HepG2 (cell line): ENCODE measurements at regions of chr6 and their contacts with region 1.

Region 1: GRCh38 chr6:128520436-128521281 is at the start of gene PTPRK:
- DNase-seq: peak; percentile 90
- ATAC-seq: peak; percentile 80
- H3K4me3 ChIP-seq: peak within 1 kb of the TSS; percentile 74 to 98 (median 97)
- H3K27ac ChIP-seq: peak within 1 kb of the TSS; percentile 93
- H3K4me1 ChIP-seq: peaks cover 53% of the 10 kb centered on the region
- H3K27me3 ChIP-seq: no peaks in the 10 kb centered on the region; a peak in 1 of 5 replicates
- CTCF ChIP-seq: peak; percentile 43; the same call in 1 of the 2 replicates
- EP300 ChIP-seq: peak; percentile 14 to 31; a peak in 1 of 4 replicates
- POLR2A ChIP-seq: peak; percentile 96 to 97
- RAD21 ChIP-seq: peak; percentile 95
- total RNA-seq, gene PTPRK: 52.4 and 98.3 TPM in 2 replicates

Region 2: GRCh38 chr6:127737009-127737486 is 783.6 kb before region 1 on chr6:
- CTCF ChIA-PET with region 1: no interaction called
- POLR2A ChIA-PET with region 1: no interaction called
- in situ Hi-C with region 1: no loop called
- intact Hi-C with region 1: loop called (anchors 5 kb)
- DNase-seq: peak; percentile 63
- ATAC-seq: peak; percentile 99
- H3K4me3 ChIP-seq: no peak overlapping the region
- H3K27ac ChIP-seq: no peak overlapping the region
- H3K4me1 ChIP-seq: no peaks in the 10 kb centered on the region
- H3K27me3 ChIP-seq: peaks cover 0 to 13% of the 10 kb centered on the region in 2 experiments; a peak in 1 of 5 replicates
- CTCF ChIP-seq: peak; percentile 82
- EP300 ChIP-seq: no peak
- POLR2A ChIP-seq: no peak
- RAD21 ChIP-seq: peak; percentile 82

Region 3: DNA sequence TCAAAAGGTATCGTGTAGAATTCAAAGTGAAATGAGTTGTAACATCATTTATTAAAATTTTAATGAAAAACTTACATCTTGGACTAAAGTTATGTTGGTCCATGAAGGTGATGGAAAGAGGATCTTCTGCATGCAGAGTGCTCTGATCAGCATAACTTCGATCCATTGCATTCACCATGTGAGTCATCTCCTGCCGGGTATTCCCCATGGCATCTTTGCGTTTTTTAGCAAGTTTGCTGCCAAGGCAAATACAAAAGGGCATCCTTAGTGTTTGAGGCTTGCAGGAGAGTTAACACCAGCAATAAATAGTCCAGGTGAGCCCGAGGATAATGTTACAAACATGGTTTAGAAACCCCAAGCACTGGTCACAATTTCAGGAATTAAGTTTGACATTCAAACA is 515.6 kb before region 1 on chr6:
- CTCF ChIA-PET with region 1: no interaction called
- POLR2A ChIA-PET with region 1: no interaction called
- in situ Hi-C with region 1: no loop called
- intact Hi-C with region 1: loop called (anchors 10 kb)
- DNase-seq: no peak
- ATAC-seq: no peak
- H3K4me3 ChIP-seq: no peak overlapping the region
- H3K27ac ChIP-seq: no peak overlapping the region
- H3K4me1 ChIP-seq: peaks cover 21% of the 10 kb centered on the region
- H3K27me3 ChIP-seq: no peaks in the 10 kb centered on the region
- CTCF ChIP-seq: no peak
- EP300 ChIP-seq: no peak
- POLR2A ChIP-seq: no peak
- RAD21 ChIP-seq: no peak

Region 4: GRCh38 chr6:128327890-128328289 is 192.8 kb before region 1 on chr6:
- CTCF ChIA-PET with region 1: no interaction called
- POLR2A ChIA-PET with region 1: no interaction called
- in situ Hi-C with region 1: no loop called
- intact Hi-C with region 1: loop called (anchors 2 kb)
- DNase-seq: peak; percentile 37
- ATAC-seq: peak; percentile 89
- H3K4me3 ChIP-seq: no peak overlapping the region
- H3K27ac ChIP-seq: no peak overlapping the region
- H3K4me1 ChIP-seq: no peaks in the 10 kb centered on the region
- H3K27me3 ChIP-seq: no peaks in the 10 kb centered on the region
- CTCF ChIP-seq: peak; percentile 79
- EP300 ChIP-seq: no peak
- POLR2A ChIP-seq: no peak
- RAD21 ChIP-seq: peak; percentile 47

Region 5: GRCh38 chr6:128421788-128422187 is 98.9 kb before region 1 on chr6:
- CTCF ChIA-PET with region 1: no interaction called
- POLR2A ChIA-PET with region 1: no interaction called
- in situ Hi-C with region 1: no loop called
- intact Hi-C with region 1: loop called (anchors 2 kb)
- DNase-seq: peak; percentile 56
- ATAC-seq: peak; percentile 83
- H3K4me3 ChIP-seq: no peak overlapping the region
- H3K27ac ChIP-seq: peak overlapping the region; percentile 57
- H3K4me1 ChIP-seq: peaks cover 31% of the 10 kb centered on the region
- H3K27me3 ChIP-seq: no peaks in the 10 kb centered on the region
- CTCF ChIP-seq: no peak
- EP300 ChIP-seq: no peak
- POLR2A ChIP-seq: no peak
- RAD21 ChIP-seq: no peak

Region 6: DNA sequence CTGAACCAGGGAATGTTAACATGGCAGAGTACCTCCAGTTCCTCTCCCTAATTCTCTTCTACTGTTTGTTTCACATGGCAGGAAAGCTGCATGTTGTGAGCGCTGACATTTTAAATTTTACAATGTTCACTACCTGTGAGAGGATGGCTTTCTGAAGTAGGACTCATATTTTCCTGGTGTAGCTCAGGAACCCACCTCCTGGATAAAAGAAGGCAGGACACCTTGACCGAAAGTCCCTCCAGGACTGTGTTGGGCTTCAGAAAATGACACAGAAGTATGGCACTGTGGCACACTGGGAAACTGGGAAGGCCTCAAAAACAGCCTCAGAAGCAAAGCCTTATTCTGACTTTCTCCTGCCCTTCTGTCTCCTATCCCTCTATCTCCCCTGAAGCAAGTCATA is 33.6 kb before region 1 on chr6:
- CTCF ChIA-PET with region 1: interaction called, 3 read pairs
- POLR2A ChIA-PET with region 1: interaction called, 5 read pairs
- in situ Hi-C with region 1: no loop called
- intact Hi-C with region 1: loop called (anchors 1 kb)
- DNase-seq: peak; percentile 46
- ATAC-seq: peak; percentile 97
- H3K4me3 ChIP-seq: no peak overlapping the region
- H3K27ac ChIP-seq: no peak overlapping the region
- H3K4me1 ChIP-seq: peaks cover 44% of the 10 kb centered on the region
- H3K27me3 ChIP-seq: no peaks in the 10 kb centered on the region
- CTCF ChIP-seq: peak; percentile 60
- EP300 ChIP-seq: no peak
- POLR2A ChIP-seq: no peak
- RAD21 ChIP-seq: peak; percentile 72

Region 7: GRCh38 chr6:128508588-128509296 is 11.9 kb before region 1 on chr6:
- CTCF ChIA-PET with region 1: no interaction called
- POLR2A ChIA-PET with region 1: interaction called, 134 read pairs
- in situ Hi-C with region 1: no loop called
- intact Hi-C with region 1: loop called (anchors 1 kb)
- DNase-seq: peak; percentile 97
- ATAC-seq: peak; percentile 71
- H3K4me3 ChIP-seq: peak overlapping the region; percentile 17 to 66 (median 55); a peak in 5 of 6 replicates
- H3K27ac ChIP-seq: peak overlapping the region; percentile 98
- H3K4me1 ChIP-seq: peaks cover 96% of the 10 kb centered on the region
- H3K27me3 ChIP-seq: no peaks in the 10 kb centered on the region
- CTCF ChIP-seq: no peak
- EP300 ChIP-seq: peak in 1 of 2 experiments; percentile 71; a peak in 3 of 4 replicates
- POLR2A ChIP-seq: peak in 1 of 2 experiments; percentile 61; a peak in 1 of 4 replicates
- RAD21 ChIP-seq: no peak

Region 8: DNA sequence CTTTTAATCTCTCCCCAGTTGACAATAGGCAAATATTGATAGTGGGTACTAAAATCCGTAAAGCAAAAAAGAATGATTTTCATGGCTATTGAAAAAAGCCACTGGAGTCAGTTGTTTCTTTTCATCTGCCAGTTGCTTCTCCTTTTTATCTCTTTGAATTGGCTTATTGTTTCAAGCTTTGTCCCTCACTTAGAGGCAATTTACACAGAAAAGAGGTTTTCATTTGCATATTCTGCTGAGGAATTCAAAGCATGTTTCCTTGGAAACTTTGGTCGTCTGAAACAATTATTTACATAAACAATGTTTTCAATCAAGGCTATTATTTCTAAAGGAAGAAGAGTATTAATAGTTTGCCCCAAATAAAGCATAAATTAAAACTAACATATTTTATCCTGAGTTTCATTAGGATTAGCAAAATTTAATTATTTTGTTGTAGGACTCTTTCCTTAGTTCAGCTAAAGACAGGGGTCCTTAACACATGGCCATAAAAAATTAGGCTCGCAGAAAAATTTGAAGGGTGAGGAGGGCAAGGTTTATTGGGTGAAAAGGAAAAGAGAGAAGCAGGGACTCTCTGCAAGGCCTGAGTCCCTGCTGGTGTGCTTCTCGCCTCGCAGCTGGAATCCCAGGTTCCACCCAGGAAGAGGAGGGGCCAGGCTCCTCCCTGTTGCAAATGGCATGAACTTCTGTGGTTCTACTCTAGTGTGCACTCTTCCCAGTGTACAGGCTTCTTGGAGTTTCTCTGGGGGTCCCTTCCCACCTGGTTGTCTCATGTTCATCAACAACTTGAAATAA is 223.5 kb after region 1 on chr6:
- CTCF ChIA-PET with region 1: no interaction called
- POLR2A ChIA-PET with region 1: no interaction called
- in situ Hi-C with region 1: no loop called
- intact Hi-C with region 1: no loop called
- DNase-seq: no peak
- ATAC-seq: no peak
- H3K4me3 ChIP-seq: no peak overlapping the region
- H3K27ac ChIP-seq: no peak overlapping the region
- H3K4me1 ChIP-seq: no peaks in the 10 kb centered on the region
- H3K27me3 ChIP-seq: peaks cover 0 to 1% of the 10 kb centered on the region in 2 experiments; a peak in 2 of 5 replicates
- CTCF ChIP-seq: no peak
- EP300 ChIP-seq: no peak
- POLR2A ChIP-seq: no peak
- RAD21 ChIP-seq: no peak

Region 9: GRCh38 chr6:128807577-128807976 is 286.9 kb after region 1 on chr6:
- CTCF ChIA-PET with region 1: no interaction called
- POLR2A ChIA-PET with region 1: no interaction called
- in situ Hi-C with region 1: no loop called
- intact Hi-C with region 1: no loop called
- DNase-seq: peak; percentile 16
- ATAC-seq: no peak
- H3K4me3 ChIP-seq: no peak overlapping the region
- H3K27ac ChIP-seq: no peak overlapping the region
- H3K4me1 ChIP-seq: no peaks in the 10 kb centered on the region
- H3K27me3 ChIP-seq: no peaks in the 10 kb centered on the region
- CTCF ChIP-seq: peak; percentile 28; the same call in 1 of the 2 replicates
- EP300 ChIP-seq: no peak
- POLR2A ChIP-seq: no peak
- RAD21 ChIP-seq: no peak

Region 10: DNA sequence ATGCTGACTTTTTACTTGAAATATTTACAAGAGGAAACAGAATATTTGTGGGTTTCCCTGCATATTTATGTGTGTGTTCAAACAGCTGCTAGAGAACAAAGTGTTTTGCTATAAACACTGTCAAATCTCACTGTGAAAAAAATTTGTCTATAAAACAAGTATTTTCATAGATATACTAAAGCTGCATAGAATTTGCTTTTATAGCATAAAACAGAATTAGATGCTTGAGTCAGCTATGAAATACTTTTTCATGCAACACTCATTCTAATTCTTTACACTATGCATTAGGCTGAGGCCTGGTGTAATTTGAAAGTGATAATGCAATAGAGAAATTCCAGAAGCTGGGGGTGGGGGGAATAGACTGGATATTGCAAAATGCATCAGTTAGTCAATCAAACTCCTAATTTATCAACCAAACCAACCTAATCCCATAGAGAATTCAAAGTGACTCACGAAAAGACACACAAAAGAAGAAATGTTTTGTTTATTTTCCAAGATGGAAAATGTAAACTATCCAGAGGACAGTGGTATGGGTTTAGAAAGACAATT is 510.5 kb after region 1 on chr6:
- CTCF ChIA-PET with region 1: no interaction called
- POLR2A ChIA-PET with region 1: no interaction called
- in situ Hi-C with region 1: no loop called
- intact Hi-C with region 1: no loop called
- DNase-seq: no peak
- ATAC-seq: no peak
- H3K4me3 ChIP-seq: no peak overlapping the region
- H3K27ac ChIP-seq: no peak overlapping the region
- H3K4me1 ChIP-seq: no peaks in the 10 kb centered on the region
- H3K27me3 ChIP-seq: no peaks in the 10 kb centered on the region
- CTCF ChIP-seq: no peak
- EP300 ChIP-seq: no peak
- POLR2A ChIP-seq: no peak
- RAD21 ChIP-seq: no peak